Calu3 (cell line): ENCODE measurements at regions of chr14 and their contacts with region 1.

Region 1: GRCh38 chr14:72781476-72782181 is 112.3 kb downstream of the DPF3 start:
- DNase-seq: peak; percentile 75
- H3K4me3 Mint-ChIP-seq: no peak overlapping the region
- H3K27ac Mint-ChIP-seq: peak overlapping the region; percentile 49
- H3K4me1 Mint-ChIP-seq: peaks cover 54% of the 10 kb centered on the region
- H3K27me3 Mint-ChIP-seq: no peaks in the 10 kb centered on the region
- CTCF ChIP-seq: no peak

Region 2: GRCh38 chr14:72801381-72801812 is 19.8 kb after region 1 on chr14:
- CTCF ChIA-PET with region 1: no interaction called
- intact Hi-C with region 1: no loop called
- DNase-seq: peak; percentile 37
- H3K4me3 Mint-ChIP-seq: no peak overlapping the region
- H3K27ac Mint-ChIP-seq: peak overlapping the region; percentile 62
- H3K4me1 Mint-ChIP-seq: peaks cover 20% of the 10 kb centered on the region
- H3K27me3 Mint-ChIP-seq: no peaks in the 10 kb centered on the region
- CTCF ChIP-seq: no peak

Region 3: DNA sequence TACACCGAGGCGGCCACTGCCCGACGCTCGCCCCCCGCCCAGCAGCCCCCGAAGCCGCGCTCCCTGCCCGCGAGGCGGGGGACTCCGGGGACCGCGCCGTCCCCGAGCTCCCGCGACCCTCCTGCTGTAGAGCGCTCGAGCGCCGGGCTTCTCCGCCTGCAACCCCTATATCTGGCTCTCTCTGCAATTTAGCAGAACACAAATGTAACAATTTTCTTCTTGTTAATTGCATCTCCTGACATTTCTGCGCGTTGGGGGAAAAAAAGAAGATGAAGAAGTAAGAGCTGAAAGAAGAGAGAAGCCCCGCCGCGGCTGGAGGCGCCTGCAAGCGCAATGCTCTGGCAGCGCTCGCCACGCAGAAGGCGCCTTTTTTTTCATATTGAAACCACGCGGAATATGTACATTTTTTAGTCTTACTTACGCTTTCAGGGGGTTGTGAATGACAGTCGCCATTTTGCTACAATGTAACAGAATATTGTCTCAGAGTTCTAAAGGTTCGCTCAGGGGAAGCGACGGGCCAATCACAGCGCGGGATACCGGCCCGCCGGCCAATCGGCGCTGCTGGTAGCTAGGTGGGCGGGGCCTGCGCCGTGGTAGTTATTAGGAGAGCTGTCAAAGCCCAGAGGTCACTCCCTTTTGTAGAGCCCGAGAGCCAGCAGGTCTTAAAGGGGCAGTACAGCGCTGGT is 112.2 kb after region 1 on chr14 and contains the start of gene DPF3:
- CTCF ChIA-PET with region 1: interaction called, 6 read pairs
- intact Hi-C with region 1: loop called (anchors 2 kb)
- DNase-seq: peak; percentile 97
- H3K4me3 Mint-ChIP-seq: peak within 1 kb of the TSS; percentile 84
- H3K27ac Mint-ChIP-seq: peak within 1 kb of the TSS; percentile 80
- H3K4me1 Mint-ChIP-seq: no peaks in the 10 kb centered on the region
- H3K27me3 Mint-ChIP-seq: peaks cover 34% of the 10 kb centered on the region
- CTCF ChIP-seq: no peak
- total RNA-seq, gene DPF3: 6.9 and 9.6 TPM in 2 replicates